ENCODE measurements at regions of chr5 and their contacts with region 1.

Region 1: GRCh38 chr5:10353241-10354047 is at the start of gene MARCHF6:
- DNase-seq: peak; percentile 90 to 98 (median 94)
- ATAC-seq: peak; percentile 92
- H3K4me3 ChIP-seq: peak within 1 kb of the TSS; percentile 84
- H3K4me3 Mint-ChIP-seq: peak within 1 kb of the TSS; percentile 81 to 99 (median 98)
- H3K27ac ChIP-seq: peak within 1 kb of the TSS; percentile 84
- H3K27ac Mint-ChIP-seq: peak within 1 kb of the TSS; percentile 96 to 100 (median 98)
- H3K4me1 ChIP-seq: peaks cover 16 to 31% of the 10 kb centered on the region in 2 donors
- H3K4me1 Mint-ChIP-seq: peaks cover 29 to 53% (median 43%) of the 10 kb centered on the region in 7 donors
- H3K27me3 ChIP-seq: no peaks in the 10 kb centered on the region
- H3K27me3 Mint-ChIP-seq: no peaks in the 10 kb centered on the region
- total RNA-seq, gene MARCHF6: 85.4 to 211 (median 180) TPM

Region 2: GRCh38 chr5:10307206-10308148 is 46.0 kb before region 1 on chr5 and contains the start of gene CMBL:
- CTCF ChIA-PET with region 1: no interaction called
- POLR2A ChIA-PET with region 1: interaction called, 3 read pairs
- intact Hi-C with region 1: loop called in 1 of 2 experiments (anchors 5 kb)
- DNase-seq: peak in 6 of 9 donors; percentile 11 to 30 (median 22)
- ATAC-seq: peak; percentile 75
- H3K4me3 ChIP-seq: peak within 1 kb of the TSS; percentile 54
- H3K4me3 Mint-ChIP-seq: peak within 1 kb of the TSS; percentile 79 to 89 (median 84)
- H3K27ac ChIP-seq: peak within 1 kb of the TSS; percentile 21
- H3K27ac Mint-ChIP-seq: peak within 1 kb of the TSS in 4 of 9 donors; percentile 2 to 87 (median 19)
- H3K4me1 ChIP-seq: no peaks in the 10 kb centered on the region
- H3K4me1 Mint-ChIP-seq: peaks cover 5 to 11% (median 7%) of the 10 kb centered on the region in 7 donors
- H3K27me3 ChIP-seq: peaks cover 0 to 3% of the 10 kb centered on the region in 2 donors
- H3K27me3 Mint-ChIP-seq: peaks cover 12 to 45% (median 30%) of the 10 kb centered on the region in 5 donors
- total RNA-seq, gene CMBL: 0.21 to 1.8 (median 1.3) TPM

Region 3: GRCh38 chr5:10317825-10318682 is 35.4 kb before region 1 on chr5:
- CTCF ChIA-PET with region 1: no interaction called
- POLR2A ChIA-PET with region 1: no interaction called
- intact Hi-C with region 1: no loop called
- DNase-seq: no peak
- ATAC-seq: no peak
- H3K4me3 ChIP-seq: no peak overlapping the region
- H3K4me3 Mint-ChIP-seq: no peak overlapping the region
- H3K27ac ChIP-seq: no peak overlapping the region
- H3K27ac Mint-ChIP-seq: peak overlapping the region in 1 of 9 donors; percentile 4
- H3K4me1 ChIP-seq: no peaks in the 10 kb centered on the region
- H3K4me1 Mint-ChIP-seq: peaks cover 0 to 2% (median 0%) of the 10 kb centered on the region in 7 donors
- H3K27me3 ChIP-seq: no peaks in the 10 kb centered on the region
- H3K27me3 Mint-ChIP-seq: peaks cover 0 to 7% (median 0%) of the 10 kb centered on the region in 5 donors

Region 4: DNA sequence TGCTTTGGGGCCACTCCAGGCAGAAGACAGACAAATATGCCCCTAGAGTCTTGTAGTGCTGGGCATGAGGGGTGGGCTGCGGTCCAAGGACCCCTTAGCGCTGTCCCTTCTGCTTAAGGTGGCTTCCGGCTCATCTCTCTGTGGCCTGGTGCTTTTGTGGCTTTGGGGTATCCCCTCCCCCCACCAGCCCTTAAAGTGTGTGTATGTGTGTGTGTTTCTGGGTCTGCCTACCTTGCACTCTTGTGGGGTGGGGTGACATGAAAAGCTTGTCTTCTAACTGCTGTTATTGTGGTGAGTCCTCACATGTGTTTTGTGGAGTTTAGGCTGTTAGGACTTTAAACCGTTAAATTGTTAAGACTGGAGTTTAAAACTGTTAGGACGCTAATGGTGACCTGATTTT is 23.6 kb after region 1 on chr5:
- CTCF ChIA-PET with region 1: no interaction called
- POLR2A ChIA-PET with region 1: no interaction called
- intact Hi-C with region 1: loop called in 1 of 2 experiments (anchors 2 kb)
- DNase-seq: no peak
- ATAC-seq: peak; percentile 54
- H3K4me3 ChIP-seq: no peak overlapping the region
- H3K4me3 Mint-ChIP-seq: peak overlapping the region in 8 of 10 donors; percentile 25 to 79 (median 49)
- H3K27ac ChIP-seq: no peak overlapping the region
- H3K27ac Mint-ChIP-seq: peak overlapping the region in 4 of 9 donors; percentile 22 to 60 (median 55)
- H3K4me1 ChIP-seq: peaks cover 13 to 28% of the 10 kb centered on the region in 2 donors
- H3K4me1 Mint-ChIP-seq: peaks cover 37 to 74% (median 69%) of the 10 kb centered on the region in 7 donors
- H3K27me3 ChIP-seq: no peaks in the 10 kb centered on the region
- H3K27me3 Mint-ChIP-seq: no peaks in the 10 kb centered on the region

Region 5: DNA sequence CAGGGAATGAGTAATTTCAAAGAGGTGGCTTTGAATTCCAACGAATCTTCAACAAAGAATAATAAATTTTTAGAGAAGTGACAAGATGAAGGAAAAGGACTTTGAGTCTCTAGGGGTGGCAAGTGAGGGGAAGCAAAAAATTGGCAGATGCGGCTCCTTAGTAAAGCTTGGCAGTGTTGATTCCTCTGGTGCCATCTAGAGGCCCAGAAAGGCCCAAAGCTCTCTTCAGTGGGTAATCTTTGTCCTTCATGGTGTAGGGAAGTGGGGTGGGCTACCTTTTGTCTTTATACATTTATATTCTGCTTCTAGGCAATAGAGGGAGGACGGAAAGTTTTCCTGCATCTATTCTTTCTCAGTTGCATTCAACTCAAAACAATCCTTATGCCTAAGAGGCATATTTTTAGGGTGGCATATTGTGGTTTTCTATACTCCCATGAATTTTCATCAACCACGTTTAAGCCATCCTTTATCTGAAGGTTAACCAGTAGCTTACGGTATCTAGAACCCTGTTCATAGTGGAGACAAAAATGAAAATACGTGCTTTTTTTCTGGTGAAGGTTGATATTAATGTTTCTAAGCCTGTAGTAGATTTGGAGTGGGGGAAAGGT is 70.8 kb after region 1 on chr5:
- CTCF ChIA-PET with region 1: no interaction called
- POLR2A ChIA-PET with region 1: no interaction called
- intact Hi-C with region 1: loop called in 1 of 2 experiments (anchors 2 kb)
- DNase-seq: peak in 3 of 9 donors; percentile 19 to 29 (median 22)
- ATAC-seq: peak; percentile 60
- H3K4me3 ChIP-seq: no peak overlapping the region
- H3K4me3 Mint-ChIP-seq: no peak overlapping the region
- H3K27ac ChIP-seq: no peak overlapping the region
- H3K27ac Mint-ChIP-seq: peak overlapping the region in 4 of 9 donors; percentile 15 to 46 (median 24)
- H3K4me1 ChIP-seq: peaks cover 0 to 21% of the 10 kb centered on the region in 2 donors
- H3K4me1 Mint-ChIP-seq: peaks cover 11 to 53% (median 35%) of the 10 kb centered on the region in 7 donors
- H3K27me3 ChIP-seq: no peaks in the 10 kb centered on the region
- H3K27me3 Mint-ChIP-seq: no peaks in the 10 kb centered on the region

Region 6: GRCh38 chr5:10552183-10553143 is 199.0 kb after region 1 on chr5:
- CTCF ChIA-PET with region 1: no interaction called
- POLR2A ChIA-PET with region 1: no interaction called
- intact Hi-C with region 1: no loop called
- DNase-seq: no peak
- ATAC-seq: peak; percentile 57
- H3K4me3 ChIP-seq: no peak overlapping the region
- H3K4me3 Mint-ChIP-seq: no peak overlapping the region
- H3K27ac ChIP-seq: no peak overlapping the region
- H3K27ac Mint-ChIP-seq: peak overlapping the region in 2 of 9 donors; percentile 26 to 29
- H3K4me1 ChIP-seq: no peaks in the 10 kb centered on the region
- H3K4me1 Mint-ChIP-seq: peaks cover 0 to 25% (median 14%) of the 10 kb centered on the region in 7 donors
- H3K27me3 ChIP-seq: no peaks in the 10 kb centered on the region
- H3K27me3 Mint-ChIP-seq: peaks cover 0 to 37% (median 11%) of the 10 kb centered on the region in 5 donors

Region 7: DNA sequence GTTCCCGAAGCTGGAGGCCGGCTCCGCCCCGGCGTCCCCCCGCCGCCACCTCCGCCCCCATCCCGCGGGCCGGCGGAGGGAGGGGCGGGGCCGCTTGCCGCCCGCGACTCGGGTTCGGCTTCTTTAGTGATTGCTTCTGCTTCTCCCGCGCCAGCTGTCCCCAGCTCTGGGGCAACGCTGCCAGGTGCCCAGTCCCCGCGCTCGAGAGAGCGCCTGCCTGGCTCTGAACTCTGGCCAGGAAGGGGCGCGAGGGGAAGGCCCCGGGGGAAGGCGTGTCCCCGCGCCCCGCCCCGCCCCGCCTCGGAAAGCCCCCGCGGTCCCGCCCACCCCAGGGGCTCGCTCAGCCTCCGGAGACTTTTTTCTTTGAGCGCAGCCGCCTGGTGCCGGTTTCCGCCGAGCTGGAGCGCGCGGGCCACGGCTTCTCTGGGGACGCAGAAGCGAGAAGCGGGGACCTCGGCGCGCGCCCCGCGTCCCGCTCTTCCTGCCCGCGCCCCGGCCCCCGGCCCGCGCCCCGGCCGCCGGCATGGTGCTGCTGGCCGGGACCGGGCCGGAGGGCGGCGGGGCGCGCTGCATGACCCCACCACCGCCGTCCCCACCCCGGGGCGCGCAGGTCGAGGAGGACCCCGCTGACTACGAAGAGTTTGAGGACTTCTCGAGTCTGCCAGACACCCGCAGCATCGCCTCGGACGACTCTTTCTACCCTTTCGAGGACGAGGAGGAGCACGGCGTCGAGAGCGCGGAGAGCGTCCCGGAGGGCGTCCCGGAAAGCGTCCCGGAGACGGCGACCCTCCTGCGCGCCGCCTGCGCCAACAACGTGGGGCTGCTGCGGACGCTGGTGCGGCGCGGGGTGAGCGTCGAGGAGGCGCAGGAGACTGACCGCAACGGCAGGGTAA is 210.7 kb after region 1 on chr5 and contains the start of gene ANKRD33B:
- CTCF ChIA-PET with region 1: no interaction called
- POLR2A ChIA-PET with region 1: no interaction called
- intact Hi-C with region 1: loop called in 1 of 2 experiments (anchors 5 kb)
- DNase-seq: peak; percentile 44 to 85 (median 66)
- ATAC-seq: peak; percentile 91
- H3K4me3 ChIP-seq: peak within 1 kb of the TSS; percentile 56
- H3K4me3 Mint-ChIP-seq: peak within 1 kb of the TSS; percentile 67 to 95 (median 85)
- H3K27ac ChIP-seq: peak within 1 kb of the TSS; percentile 72
- H3K27ac Mint-ChIP-seq: peak within 1 kb of the TSS in 2 of 9 donors; percentile 57 to 86
- H3K4me1 ChIP-seq: peaks cover 0 to 13% of the 10 kb centered on the region in 2 donors
- H3K4me1 Mint-ChIP-seq: peaks cover 6 to 28% (median 17%) of the 10 kb centered on the region in 7 donors
- H3K27me3 ChIP-seq: no peaks in the 10 kb centered on the region
- H3K27me3 Mint-ChIP-seq: peaks cover 0 to 30% (median 0%) of the 10 kb centered on the region in 5 donors
- total RNA-seq, gene ANKRD33B: 0.30 to 10.1 (median 1.0) TPM

Region 8: DNA sequence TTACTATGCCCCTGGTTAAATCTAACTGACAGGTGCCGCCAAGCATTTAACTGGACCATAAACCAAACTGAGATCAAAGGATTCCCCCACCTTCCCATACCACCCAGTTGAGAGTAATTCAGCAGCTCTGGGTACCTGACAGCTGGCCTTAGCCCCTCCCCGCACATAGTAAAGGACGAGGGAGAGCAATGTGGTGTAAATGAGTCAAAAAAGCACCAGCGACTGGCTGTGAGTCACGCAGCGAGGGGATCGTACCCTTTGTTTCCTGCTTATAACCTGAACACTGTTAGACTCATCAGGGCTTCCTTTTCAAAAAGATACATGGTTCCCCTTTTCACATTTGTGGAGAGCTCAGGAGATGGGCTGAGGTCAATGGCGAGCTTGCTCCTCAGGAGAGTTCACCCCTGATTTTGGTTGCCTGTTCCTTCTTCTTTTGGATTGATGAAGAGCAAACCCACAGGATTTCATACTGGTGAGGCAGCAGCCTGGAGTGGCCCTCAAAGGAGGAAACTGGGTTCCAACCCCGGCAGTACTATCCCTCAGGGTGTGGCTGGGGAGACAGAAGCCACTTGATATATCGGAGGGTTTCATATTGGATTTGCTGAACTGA is 281.9 kb after region 1 on chr5:
- CTCF ChIA-PET with region 1: no interaction called
- POLR2A ChIA-PET with region 1: no interaction called
- intact Hi-C with region 1: loop called in 1 of 2 experiments (anchors 2 kb)
- DNase-seq: peak in 1 of 9 donors; percentile 70
- ATAC-seq: peak; percentile 76
- H3K4me3 ChIP-seq: no peak overlapping the region
- H3K4me3 Mint-ChIP-seq: peak overlapping the region in 6 of 10 donors; percentile 19 to 70 (median 39)
- H3K27ac ChIP-seq: no peak overlapping the region
- H3K27ac Mint-ChIP-seq: peak overlapping the region in 4 of 9 donors; percentile 51 to 91 (median 68)
- H3K4me1 ChIP-seq: peaks cover 6 to 26% of the 10 kb centered on the region in 2 donors
- H3K4me1 Mint-ChIP-seq: peaks cover 12 to 61% (median 30%) of the 10 kb centered on the region in 7 donors
- H3K27me3 ChIP-seq: no peaks in the 10 kb centered on the region
- H3K27me3 Mint-ChIP-seq: no peaks in the 10 kb centered on the region

Region 9: DNA sequence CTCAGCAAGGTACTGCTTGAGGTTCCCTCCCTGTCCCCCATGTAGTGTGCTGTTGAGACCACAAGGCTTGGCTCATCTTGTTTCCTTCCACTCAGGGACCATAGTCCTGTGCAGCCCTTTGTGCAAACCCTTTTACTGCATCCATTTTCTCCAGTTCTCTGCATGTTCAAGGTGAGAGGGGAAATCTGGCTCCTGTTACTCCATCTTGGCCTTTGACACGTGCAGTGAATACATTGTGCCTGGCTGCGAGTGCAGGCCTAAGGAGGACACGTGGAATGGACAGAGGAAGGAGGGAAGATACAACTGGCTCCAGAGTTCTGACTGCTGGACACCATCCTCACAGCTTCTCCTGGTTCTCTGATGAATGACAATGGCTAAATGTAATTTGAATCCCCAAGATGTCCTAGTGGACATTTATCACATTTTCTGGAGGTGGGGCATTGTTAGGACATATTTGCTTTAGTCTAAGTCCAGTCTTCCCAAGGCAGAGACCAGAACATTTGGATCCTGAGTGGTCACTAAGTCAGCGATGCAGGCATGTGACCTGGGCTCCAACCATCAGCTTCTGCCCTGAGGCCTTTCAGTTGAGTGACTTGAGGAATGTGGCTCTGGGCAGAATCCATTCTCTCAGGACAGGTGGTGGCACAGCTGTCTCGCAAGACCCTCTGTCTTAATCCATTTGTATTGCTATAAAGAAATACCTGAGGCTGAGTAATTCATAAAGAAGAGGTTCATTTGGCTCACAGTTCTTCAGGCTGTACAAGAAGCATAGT is 596.6 kb after region 1 on chr5:
- CTCF ChIA-PET with region 1: no interaction called
- POLR2A ChIA-PET with region 1: no interaction called
- intact Hi-C with region 1: no loop called
- DNase-seq: no peak
- ATAC-seq: no peak
- H3K4me3 ChIP-seq: no peak overlapping the region
- H3K4me3 Mint-ChIP-seq: no peak overlapping the region
- H3K27ac ChIP-seq: no peak overlapping the region
- H3K27ac Mint-ChIP-seq: no peak overlapping the region
- H3K4me1 ChIP-seq: no peaks in the 10 kb centered on the region
- H3K4me1 Mint-ChIP-seq: no peaks in the 10 kb centered on the region
- H3K27me3 ChIP-seq: no peaks in the 10 kb centered on the region
- H3K27me3 Mint-ChIP-seq: peaks cover 0 to 31% (median 14%) of the 10 kb centered on the region in 5 donors

Measured in naive thymus-derived CD4-positive, alpha-beta T cell (primary cell).